ENCODE measurements at regions of chr16 and their contacts with region 1.

Region 1: DNA sequence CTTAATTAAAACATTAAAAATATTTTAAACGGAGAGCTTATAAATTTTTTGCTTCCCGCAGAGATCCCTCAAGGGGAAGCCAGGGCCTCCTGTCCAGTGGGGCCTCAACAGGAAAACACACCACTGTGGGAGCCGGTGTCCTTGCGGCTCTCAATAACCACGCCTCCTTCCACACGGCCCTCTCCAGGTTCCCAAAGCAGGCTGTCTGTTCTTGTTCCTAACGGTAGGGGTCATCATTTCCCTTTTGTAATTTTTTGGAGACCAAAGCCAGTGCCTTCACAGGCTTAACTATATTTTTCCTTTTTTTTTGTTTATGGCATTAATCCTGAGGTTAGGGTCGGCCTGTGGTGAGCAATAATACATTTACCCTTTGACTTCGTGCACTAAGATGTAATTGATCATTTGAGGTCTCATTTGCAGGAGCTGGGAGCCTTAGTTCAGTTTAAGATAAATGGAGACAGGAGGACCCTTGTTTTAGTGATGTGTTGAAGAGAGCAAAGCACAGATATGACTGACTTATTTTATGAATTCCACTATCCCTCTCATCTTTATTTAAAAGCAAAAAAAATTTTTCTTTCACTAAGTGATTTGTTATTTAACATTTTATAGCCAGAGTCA is 77.5 kb upstream of the N4BP1 start:
- DNase-seq: peak in 1 of 2 donors; percentile 22
- H3K4me3 ChIP-seq: no peak overlapping the region
- H3K27ac ChIP-seq: no peak overlapping the region
- H3K4me1 ChIP-seq: no peaks in the 10 kb centered on the region
- H3K27me3 ChIP-seq: peaks cover 0 to 4% of the 10 kb centered on the region in 2 donors
- CTCF ChIP-seq: peak in 1 of 2 experiments; percentile 49

Region 2: GRCh38 chr16:48623304-48624016 is 64.1 kb before region 1 on chr16:
- intact Hi-C with region 1: no loop called
- DNase-seq: peak; percentile 78 to 91
- H3K4me3 ChIP-seq: peak overlapping the region; percentile 49 to 56
- H3K27ac ChIP-seq: peak overlapping the region; percentile 68
- H3K4me1 ChIP-seq: peaks cover 0 to 18% (median 6%) of the 10 kb centered on the region in 4 donors
- H3K27me3 ChIP-seq: no peaks in the 10 kb centered on the region
- CTCF ChIP-seq: peak; percentile 95 to 99

Region 3: DNA sequence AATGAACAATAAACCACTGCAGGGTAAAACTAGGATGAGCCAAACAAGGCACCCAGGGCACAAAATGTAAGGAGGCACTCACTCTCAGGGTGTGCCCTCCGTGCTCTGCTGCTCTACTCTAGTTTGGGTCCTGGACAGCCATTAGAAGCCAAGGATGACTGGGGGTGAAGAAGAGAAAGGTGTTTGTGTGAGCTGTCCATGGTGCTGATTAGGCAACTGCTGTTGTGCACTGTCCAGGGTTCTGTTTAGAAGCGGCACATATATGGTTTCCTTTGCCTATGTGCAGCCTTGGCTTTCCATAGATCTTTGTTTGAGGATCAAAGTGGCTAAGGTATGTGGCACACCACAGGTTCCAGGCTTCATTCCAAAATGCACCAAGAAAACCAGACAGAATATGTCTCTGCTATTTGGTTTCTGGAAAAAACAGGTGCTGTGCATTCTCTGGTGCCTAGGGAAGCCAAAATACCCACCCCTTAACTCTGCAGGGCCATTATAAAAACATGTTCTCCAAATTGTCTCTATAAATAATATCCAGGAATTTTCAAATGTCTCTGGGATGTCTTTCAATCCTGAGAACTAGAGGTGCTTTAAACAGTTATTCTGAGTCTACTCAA is 470.6 kb after region 1 on chr16:
- intact Hi-C with region 1: no loop called
- DNase-seq: no peak
- H3K4me3 ChIP-seq: no peak overlapping the region
- H3K27ac ChIP-seq: no peak overlapping the region
- H3K4me1 ChIP-seq: no peaks in the 10 kb centered on the region
- H3K27me3 ChIP-seq: no peaks in the 10 kb centered on the region
- CTCF ChIP-seq: no peak

Region 4: DNA sequence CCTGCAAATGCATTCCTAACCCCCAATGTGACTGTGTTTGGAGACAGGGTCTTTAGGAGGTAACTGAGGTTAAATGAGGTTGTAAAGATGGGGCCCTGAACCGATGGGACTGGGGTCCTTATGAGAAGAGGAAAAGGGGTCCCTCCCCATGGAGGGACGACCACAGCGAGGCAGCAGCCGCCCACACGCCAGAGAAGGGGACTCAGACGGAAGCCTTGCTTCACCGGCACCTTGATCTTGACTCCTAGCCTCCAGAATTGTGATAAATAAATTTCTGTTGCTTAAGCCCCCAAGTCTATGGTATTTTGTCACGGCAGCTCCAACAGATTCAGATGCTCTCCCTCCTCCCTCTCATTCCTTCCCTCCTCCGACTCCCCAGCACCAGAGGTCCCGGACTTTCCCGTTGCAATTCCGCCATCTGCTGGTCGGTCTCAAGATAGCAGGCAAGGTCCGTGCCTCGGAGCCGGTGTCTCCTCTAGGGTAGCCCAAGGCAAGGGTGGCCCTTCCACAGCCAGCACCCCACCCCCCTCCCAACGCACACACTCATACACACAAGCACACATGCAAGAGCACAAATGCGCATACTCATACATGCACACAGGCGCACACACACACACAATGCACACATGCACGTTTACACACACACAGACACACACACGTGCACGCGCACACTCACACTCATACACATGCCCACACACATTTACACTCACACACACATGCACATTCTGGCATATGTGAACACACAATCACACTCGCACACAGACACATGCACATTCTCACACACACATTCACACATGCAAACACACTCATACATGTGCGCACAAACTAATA is 663.0 kb after region 1 on chr16:
- intact Hi-C with region 1: loop called (anchors 10 kb)
- DNase-seq: peak in 1 of 2 donors; percentile 38
- H3K4me3 ChIP-seq: no peak overlapping the region
- H3K27ac ChIP-seq: no peak overlapping the region
- H3K4me1 ChIP-seq: no peaks in the 10 kb centered on the region
- H3K27me3 ChIP-seq: peaks cover 0 to 47% of the 10 kb centered on the region in 2 donors
- CTCF ChIP-seq: peak; percentile 57 to 65

Measured in tibial artery (tissue), 4 donors.